Cardiac septum (tissue), 1 donor: ENCODE measurements at regions of chr2 and their contacts with region 1.

Region 1: DNA sequence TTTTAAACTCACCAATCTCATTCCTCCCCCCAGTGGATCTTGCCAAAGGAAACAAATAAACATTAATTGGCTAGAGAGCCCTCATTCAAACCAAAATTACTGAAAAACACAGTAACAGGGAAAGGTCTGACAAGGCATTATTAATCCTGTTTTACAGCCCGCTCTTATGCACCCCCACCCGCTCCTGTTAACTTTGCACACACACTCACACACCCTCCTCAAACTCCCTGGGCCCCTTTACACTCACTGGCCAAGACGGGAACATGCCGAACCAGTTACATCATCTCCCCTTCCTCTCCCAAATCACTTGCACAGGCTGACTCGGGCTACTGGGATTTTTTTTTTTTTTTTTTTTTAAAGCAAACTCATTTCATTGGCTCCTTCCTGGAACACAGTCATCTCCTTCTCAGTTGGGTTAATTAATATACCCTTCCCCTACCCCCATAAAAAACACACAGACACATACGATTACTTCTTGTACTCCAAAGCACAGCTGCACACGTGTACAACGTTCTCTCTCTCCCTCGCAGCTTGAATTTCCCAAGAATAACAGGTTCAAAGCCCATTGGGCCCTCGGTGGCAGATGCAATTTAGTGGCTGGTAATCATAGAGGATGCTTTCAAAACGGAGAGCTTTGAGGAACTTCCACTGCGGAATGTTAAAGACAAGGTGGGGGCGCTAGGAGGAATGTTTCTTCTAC is 31.8 kb downstream of the KLF7 start:
- DNase-seq: peak; percentile 88

Region 2: DNA sequence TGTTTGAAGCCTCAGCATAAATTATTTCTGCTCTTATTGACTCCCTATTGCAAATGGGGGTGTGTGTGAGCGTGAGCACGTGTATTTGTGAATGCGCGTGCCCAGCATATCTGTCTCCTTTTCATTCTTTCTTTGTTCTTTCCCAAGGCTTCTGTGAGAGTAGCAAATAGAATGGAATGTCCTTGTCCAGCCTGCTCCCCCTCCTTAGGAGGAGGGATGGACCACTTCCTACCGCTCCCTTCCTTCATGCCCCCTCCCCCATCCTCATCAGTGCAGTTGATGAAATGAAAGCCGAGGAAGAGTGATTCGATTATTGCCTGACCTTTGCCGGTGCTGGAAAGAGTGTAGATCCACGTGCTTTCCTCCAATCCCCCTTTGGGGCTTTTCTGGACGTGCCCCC is 92.7 kb before region 1 on chr2:
- intact Hi-C with region 1: loop called (anchors 5 kb)
- DNase-seq: no peak

Region 3: GRCh38 chr2:207073801-207074678 is 59.9 kb before region 1 on chr2:
- intact Hi-C with region 1: no loop called
- DNase-seq: no peak

Region 4: GRCh38 chr2:207086136-207086535 is 47.8 kb before region 1 on chr2:
- intact Hi-C with region 1: loop called (anchors 5 kb)
- DNase-seq: no peak

Region 5: GRCh38 chr2:207184348-207184747 is 50.4 kb after region 1 on chr2:
- intact Hi-C with region 1: no loop called
- DNase-seq: no peak

Region 6: GRCh38 chr2:207676827-207677354 is 542.9 kb after region 1 on chr2:
- intact Hi-C with region 1: no loop called
- DNase-seq: no peak